ENCODE measurements at regions of chr19 and their contacts with region 1.

Region 1: GRCh38 chr19:7943444-7944176 is at the start of gene TIMM44:
- DNase-seq: peak; percentile 99
- CTCF ChIP-seq: no peak

Region 2: DNA sequence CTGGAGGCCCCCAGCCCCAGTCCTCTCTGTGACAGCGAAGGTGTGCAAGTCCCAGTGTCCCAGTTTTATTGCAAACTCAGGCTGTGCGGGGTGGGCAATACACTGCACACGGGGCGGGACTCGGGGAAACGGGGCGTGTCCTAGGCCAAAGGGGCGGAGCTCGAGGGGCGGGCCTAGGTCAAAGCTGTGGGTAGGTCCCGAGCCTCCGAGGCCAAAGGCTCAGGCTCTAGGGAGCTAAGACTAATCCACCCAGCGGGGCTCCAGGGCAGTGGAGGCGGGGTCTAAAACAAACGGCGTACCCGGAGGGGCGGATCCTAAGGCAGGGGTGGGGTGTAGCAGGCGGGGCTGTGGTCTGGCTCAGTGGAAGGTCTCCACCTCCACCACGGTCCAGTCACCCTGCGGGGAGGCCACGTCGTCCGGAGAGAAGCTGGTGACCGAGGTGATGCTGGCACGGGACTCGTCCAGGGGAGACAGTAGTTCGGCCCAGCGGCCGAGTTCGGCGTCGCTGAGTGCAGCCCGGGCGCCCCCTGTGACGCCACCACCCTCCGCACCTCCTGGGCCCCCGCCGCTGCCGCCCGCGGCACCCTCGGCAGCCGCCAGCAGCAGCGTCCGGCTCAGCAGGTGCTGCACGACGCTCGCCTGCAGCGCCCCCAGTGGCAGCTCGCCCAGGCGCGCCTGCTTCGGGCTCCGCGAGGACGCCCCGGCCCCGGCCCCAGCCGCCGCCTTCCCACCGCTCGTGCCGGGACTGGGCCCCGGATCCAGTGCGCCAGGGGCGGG is 74.7 kb before region 1 on chr19:
- CTCF ChIA-PET with region 1: interaction called, 12 read pairs
- POLR2A ChIA-PET with region 1: interaction called, 3 read pairs
- DNase-seq: peak; percentile 92
- CTCF ChIP-seq: peak; percentile 95

Region 3: DNA sequence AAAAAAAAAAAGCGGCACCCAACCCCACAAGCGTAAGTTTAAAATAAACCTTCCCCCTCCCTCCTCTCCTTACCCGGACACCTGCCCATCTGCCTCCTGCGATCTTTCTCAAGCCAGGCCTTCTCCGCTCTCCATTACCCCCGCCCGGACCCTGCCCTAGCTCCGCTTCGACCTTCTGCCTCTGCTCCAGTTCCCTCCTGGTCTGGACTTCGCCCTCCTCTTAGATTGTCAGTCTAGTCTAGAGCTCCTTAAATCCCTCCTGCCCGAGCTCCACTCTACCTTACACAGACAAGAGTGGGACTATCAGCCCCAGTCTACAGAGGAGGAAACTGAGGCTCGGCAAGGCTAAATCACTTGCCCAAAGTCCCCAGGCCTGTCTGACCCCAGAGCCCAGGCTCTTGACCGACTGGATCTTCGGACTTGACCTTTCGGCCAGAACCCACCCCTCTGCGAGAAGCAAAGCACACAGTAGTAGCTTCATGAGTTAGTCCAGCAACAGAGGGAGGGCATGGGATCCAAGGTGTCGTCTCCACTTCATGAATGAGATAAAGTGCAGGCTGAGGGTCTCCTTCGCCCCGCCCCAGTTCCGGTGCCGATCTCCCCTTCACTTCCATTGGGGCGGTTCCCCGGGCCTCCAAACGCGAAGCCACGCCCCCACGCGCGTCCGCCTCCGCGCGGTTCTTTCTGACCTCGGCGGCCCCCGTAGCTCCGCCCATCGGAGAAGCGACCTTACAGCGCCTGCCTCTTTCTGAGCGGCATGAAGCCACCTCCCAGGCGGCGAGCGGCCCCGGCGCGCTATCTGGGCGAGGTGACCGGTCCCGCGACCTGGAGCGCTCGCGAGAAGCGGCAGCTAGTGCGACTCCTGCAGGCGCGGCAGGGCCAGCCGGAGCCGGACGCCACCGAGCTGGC is 23.7 kb before region 1 on chr19 and contains the start of gene SNAPC2:
- CTCF ChIA-PET with region 1: interaction called, 17 read pairs
- POLR2A ChIA-PET with region 1: interaction called, 18 read pairs
- DNase-seq: peak; percentile 92
- CTCF ChIP-seq: no peak

Region 4: GRCh38 chr19:7959211-7959610 is 15.6 kb after region 1 on chr19:
- CTCF ChIA-PET with region 1: interaction called, 21 read pairs
- POLR2A ChIA-PET with region 1: no interaction called
- DNase-seq: no peak
- CTCF ChIP-seq: no peak

Region 5: GRCh38 chr19:8005534-8006256 is 62.1 kb after region 1 on chr19 and contains the start of gene ELAVL1:
- CTCF ChIA-PET with region 1: interaction called, 27 read pairs
- POLR2A ChIA-PET with region 1: interaction called, 3 read pairs
- DNase-seq: peak; percentile 97
- CTCF ChIP-seq: no peak